ENCODE measurements at regions of chr7 and their contacts with region 1.

Region 1: GRCh38 chr7:146090023-146090645 is 26.5 kb upstream of the CNTNAP2 start:
- DNase-seq: no peak
- ATAC-seq: no peak

Region 2: GRCh38 chr7:144854839-144855424 is 1235.2 kb before region 1 on chr7:
- intact Hi-C with region 1: loop called in 1 of 2 experiments (anchors 5 kb)
- DNase-seq: no peak
- ATAC-seq: no peak